ENCODE measurements at regions of chr16 and their contacts with region 1.

Region 1: DNA sequence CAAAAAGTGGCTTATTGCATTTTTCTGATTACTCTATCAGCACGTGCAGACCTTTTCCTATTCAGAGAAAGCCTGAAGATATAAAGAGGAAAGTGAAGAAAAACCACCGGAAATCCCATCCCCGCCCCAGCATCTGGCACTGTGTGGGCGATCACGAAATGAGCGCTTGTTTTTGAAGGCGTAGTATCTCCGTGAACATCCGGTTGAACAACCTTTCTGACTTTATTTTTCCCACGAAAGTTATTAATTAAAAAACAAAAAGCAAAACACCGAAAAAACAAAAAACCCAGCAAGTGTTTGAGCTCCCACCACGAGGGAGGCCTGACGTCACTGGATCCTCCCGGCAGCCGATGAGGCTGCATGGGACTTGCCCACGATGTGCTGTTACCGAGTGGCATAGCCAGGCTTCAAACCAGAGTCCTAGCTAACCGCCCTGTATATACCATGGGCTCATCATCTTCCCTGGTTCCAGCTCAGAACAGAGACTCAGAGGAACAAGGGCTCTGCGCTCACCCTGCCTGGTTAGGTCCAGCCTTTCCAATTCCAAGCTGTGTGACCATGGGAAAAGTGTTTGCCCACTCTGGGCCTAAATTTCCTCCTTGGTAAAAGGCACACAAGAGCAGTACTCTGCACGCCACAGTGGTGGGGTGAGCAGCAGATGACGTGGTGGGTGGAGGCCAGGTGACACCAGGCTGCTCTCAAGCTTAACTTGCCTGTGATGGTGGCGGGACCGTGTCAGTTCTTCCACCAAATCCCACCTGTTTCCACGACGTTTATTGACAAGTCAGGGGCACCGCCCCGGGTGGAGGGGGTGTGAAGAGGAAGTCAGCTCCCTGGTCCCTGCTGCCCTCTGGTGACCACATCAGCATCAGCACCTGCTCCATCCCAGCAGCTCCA is 34.3 kb upstream of the IL21R start:
- DNase-seq: peak; percentile 68
- H3K4me3 ChIP-seq: peak overlapping the region in 1 of 3 experiments; percentile 19
- H3K27ac ChIP-seq: peak overlapping the region; percentile 43
- H3K4me1 ChIP-seq: peaks cover 46% of the 10 kb centered on the region
- H3K27me3 ChIP-seq: no peaks in the 10 kb centered on the region
- CTCF ChIP-seq: peak; percentile 56 to 84

Region 2: DNA sequence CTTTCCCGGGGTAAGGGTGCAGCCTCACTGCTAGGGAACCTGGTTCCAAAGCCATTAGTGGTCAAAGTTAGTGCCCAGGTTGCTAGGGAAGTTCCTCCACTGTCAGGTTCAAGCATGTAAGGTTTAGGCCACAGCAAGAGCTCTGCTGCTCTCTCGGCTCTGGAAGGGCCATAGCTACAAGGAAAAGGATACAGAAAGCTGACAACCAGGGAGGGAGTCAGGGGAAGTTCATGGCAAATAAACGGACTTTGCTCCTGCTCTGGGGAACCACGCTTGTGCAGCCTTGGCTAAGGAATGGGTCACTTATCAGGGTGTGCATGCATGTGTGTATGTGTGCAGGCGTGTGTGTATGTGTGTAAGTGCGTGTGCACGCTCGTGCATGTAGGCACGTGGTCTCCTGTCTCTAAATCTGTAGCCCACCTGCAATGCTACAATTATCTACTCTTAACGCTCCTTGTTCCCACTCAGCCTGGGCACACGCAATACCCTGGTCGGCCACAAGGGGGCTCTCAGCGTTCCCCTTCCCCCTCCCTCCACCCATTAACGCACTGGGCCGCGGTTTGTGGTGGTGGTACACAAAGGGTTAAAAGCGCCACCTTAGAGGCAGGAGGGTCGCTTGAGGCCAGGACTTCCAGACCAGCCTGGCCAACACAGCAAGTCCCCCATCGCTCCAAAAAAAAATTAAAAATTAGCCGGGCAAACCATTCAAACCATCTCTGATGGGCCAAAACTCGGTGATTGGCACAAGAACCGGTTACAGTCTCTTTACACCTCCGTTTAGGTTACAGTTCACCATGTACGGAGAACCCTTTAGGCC is 212.8 kb before region 1 on chr16:
- CTCF ChIA-PET with region 1: no interaction called
- dilution Hi-C with region 1: no loop called
- in situ Hi-C with region 1: no loop called
- intact Hi-C with region 1: loop called (anchors 1 kb)
- DNase-seq: peak; percentile 14
- H3K4me3 ChIP-seq: no peak overlapping the region
- H3K27ac ChIP-seq: no peak overlapping the region
- H3K4me1 ChIP-seq: no peaks in the 10 kb centered on the region
- H3K27me3 ChIP-seq: no peaks in the 10 kb centered on the region
- CTCF ChIP-seq: peak; percentile 94 to 98

Region 3: DNA sequence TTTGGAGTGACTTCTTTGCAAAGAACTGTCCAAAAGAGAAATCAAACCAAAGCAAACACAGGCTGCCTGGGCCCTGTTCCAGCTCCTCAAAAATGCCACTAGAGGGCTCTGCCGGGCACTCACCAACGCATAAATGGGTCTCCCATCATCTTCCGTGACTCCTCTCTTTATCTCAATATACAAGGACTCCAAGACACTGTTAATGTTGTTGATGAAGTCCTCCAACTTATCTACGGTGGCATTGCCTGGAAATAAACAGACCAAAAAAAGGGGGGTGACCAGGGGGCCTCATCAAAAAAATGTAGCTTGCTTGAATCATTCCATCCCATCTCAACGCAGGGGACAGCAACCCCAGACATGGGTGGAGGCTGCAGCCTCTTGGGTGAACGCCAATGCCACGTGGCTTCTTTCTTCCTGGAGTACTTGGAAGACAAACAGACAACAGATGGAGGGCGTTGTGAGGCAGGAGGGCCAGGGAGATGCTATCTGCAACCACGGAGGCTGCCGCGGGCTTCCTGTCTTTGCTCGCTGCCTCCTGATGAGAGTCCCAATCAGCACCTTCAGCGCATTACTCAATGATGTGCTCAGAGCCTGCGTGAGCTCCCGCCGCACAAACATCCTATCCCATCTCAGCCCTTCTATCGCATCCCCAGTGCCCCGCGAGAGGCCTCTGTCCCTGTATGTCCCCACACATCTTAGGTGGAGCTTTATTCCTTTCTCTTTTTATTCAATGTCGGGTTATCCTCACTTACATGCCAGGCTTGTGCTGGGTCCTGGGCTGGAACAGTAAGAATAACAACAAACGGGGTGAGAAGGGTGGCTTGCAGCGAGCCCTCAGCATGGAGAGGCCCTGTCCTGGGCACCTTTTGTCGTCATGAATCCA is 132.4 kb before region 1 on chr16:
- CTCF ChIA-PET with region 1: interaction called, 6 read pairs
- dilution Hi-C with region 1: no loop called
- in situ Hi-C with region 1: loop called in 1 of 2 experiments (anchors 10 kb)
- intact Hi-C with region 1: loop called (anchors 1 kb)
- DNase-seq: peak; percentile 78
- H3K4me3 ChIP-seq: no peak overlapping the region
- H3K27ac ChIP-seq: peak overlapping the region; percentile 26
- H3K4me1 ChIP-seq: peaks cover 25% of the 10 kb centered on the region
- H3K27me3 ChIP-seq: no peaks in the 10 kb centered on the region
- CTCF ChIP-seq: peak; percentile 93 to 96

Region 4: GRCh38 chr16:27455700-27456099 is 88.0 kb after region 1 on chr16:
- CTCF ChIA-PET with region 1: no interaction called
- dilution Hi-C with region 1: loop called (anchors 5 kb)
- in situ Hi-C with region 1: no loop called
- intact Hi-C with region 1: loop called (anchors 1 kb)
- DNase-seq: peak; percentile 40
- H3K4me3 ChIP-seq: no peak overlapping the region
- H3K27ac ChIP-seq: no peak overlapping the region
- H3K4me1 ChIP-seq: peaks cover 17% of the 10 kb centered on the region
- H3K27me3 ChIP-seq: no peaks in the 10 kb centered on the region
- CTCF ChIP-seq: no peak

Measured in mammary epithelial cell (primary cell).